BJ (cell line): ENCODE measurements at regions of chr2 and their contacts with region 1.

Region 1: GRCh38 chr2:26846328-26847306 is 1.3 kb upstream of the DPYSL5 start:
- DNase-seq: peak; percentile 6
- H3K4me3 ChIP-seq: no peak overlapping the region
- H3K27me3 ChIP-seq: peaks cover 58% of the 10 kb centered on the region
- CTCF ChIP-seq: peak; percentile 83

Region 2: DNA sequence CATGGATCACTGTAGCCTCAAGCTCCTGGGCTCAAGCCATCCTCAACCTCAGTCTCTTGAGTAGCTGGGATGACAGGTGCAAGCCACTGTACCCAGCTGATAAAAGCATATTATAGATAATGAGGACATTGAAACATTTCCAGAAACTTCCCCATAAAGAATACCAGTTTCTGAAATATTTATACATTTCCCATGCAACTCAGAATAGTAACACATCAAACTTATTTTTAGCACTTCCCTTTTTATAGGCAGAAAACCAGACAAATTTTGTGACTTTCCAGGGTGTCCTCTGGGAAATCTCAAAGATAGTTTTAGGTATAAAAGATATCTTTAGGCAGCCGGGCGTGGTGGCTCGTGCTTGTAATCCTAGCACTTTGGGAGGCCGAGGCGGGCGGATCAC is 23.7 kb before region 1 on chr2:
- CTCF ChIA-PET with region 1: interaction called, 16 read pairs
- POLR2A ChIA-PET with region 1: no interaction called
- DNase-seq: no peak
- H3K4me3 ChIP-seq: no peak overlapping the region
- H3K27me3 ChIP-seq: peaks cover 5% of the 10 kb centered on the region
- CTCF ChIP-seq: no peak

Region 3: GRCh38 chr2:26922405-26923188 is 76.0 kb after region 1 on chr2:
- CTCF ChIA-PET with region 1: interaction called, 24 read pairs
- POLR2A ChIA-PET with region 1: no interaction called
- DNase-seq: no peak
- H3K4me3 ChIP-seq: no peak overlapping the region
- H3K27me3 ChIP-seq: peaks cover 6% of the 10 kb centered on the region
- CTCF ChIP-seq: peak; percentile 52

Region 4: GRCh38 chr2:26959331-26959730 is 112.7 kb after region 1 on chr2:
- CTCF ChIA-PET with region 1: interaction called, 10 read pairs
- POLR2A ChIA-PET with region 1: no interaction called
- DNase-seq: no peak
- H3K4me3 ChIP-seq: no peak overlapping the region
- H3K27me3 ChIP-seq: peaks cover 20% of the 10 kb centered on the region
- CTCF ChIP-seq: no peak

Region 5: DNA sequence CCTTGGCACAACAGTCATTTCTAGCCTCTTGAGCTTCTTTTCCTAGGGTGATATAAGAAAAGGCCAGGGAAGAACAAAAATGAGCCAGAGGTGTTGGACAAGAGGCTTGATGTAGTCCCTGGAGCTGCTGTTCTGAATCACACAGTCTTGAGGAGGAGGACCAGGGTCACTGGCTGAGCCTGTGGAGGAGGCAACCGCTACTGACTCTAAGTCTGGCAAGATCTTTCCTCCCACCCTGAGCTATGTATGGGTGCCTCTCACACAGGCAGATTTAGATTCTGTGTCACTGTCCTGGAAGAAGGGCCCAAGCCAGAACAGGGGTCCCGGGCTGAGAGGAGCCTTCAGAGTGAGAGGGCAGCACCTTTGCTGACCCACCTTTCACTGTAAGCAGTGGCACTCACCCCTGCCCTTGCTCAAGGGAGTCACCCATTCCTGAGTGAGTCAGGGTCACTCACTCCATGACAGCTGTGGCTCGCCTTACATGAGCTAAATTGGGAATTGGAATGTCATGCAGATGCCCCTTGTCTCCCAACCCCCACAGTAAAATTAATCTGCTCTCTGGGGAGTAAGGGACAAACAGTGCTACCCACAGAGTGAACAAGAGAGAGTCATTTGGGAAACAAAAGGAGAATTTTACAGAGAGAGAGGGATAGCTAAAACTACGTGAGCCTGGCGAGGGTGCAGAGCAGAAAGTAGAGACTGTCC is 435.4 kb after region 1 on chr2 and contains the start of gene TRIM54:
- CTCF ChIA-PET with region 1: interaction called, 14 read pairs
- POLR2A ChIA-PET with region 1: no interaction called
- DNase-seq: no peak
- H3K4me3 ChIP-seq: no peak within 1 kb of the TSS
- H3K27me3 ChIP-seq: peaks cover 10% of the 10 kb centered on the region
- CTCF ChIP-seq: no peak
- polyA plus RNA-seq, gene TRIM54: 0.05 TPM in 1 of 2 replicates, not detected in the other